ENCODE measurements at regions of chr9 and their contacts with region 1.

Region 1: GRCh38 chr9:14322211-14323082 is 8.5 kb upstream of the NFIB start:
- DNase-seq: peak; percentile 83 to 98 (median 86)

Region 2: GRCh38 chr9:14343261-14344031 is 21.0 kb after region 1 on chr9:
- intact Hi-C with region 1: loop called (anchors 2 kb)
- DNase-seq: peak in 1 of 10 donors; percentile 67

Measured in posterior cingulate gyrus (tissue), 11 donors.